ENCODE measurements at regions of chr14 and their contacts with region 1.

Region 1: DNA sequence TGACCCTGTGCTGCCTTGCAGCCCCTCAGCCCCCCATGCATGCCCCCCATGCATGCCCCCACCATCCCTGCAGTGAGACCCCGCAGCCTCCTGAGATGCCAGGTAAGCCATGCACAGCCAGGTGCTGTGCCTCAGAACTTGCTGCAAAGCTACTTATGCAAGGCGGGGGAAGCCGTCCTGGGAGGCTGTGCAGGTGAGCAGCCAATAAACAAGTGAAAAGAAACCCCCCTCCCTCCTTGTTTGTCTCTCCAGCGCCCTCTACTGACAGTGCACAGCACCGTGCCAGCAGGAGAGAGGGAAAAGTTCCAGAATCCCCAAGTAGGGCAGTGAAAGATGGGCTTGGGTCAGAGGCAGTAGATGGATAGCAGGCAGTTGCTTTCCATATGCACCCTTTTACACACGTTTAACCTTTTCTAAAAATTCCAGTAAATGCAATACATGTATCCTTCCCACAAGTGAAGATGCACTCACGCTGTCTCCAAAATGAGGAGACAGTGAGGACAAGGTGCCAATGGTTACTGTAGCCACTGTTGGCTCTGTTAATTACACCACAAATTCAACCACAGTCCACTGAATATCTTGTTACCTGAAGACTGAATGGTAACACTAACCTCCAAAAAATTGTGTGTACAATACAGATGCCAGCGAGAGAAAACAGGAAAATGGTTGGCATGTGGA is 18.0 kb downstream of the TNFAIP2 start:
- DNase-seq: peak; percentile 76
- ATAC-seq: no peak
- H3K4me3 ChIP-seq: no peak overlapping the region
- H3K27ac ChIP-seq: no peak overlapping the region
- H3K4me1 ChIP-seq: peaks cover 32% of the 10 kb centered on the region
- H3K27me3 ChIP-seq: no peaks in the 10 kb centered on the region
- CTCF ChIP-seq: peak; percentile 84

Region 2: DNA sequence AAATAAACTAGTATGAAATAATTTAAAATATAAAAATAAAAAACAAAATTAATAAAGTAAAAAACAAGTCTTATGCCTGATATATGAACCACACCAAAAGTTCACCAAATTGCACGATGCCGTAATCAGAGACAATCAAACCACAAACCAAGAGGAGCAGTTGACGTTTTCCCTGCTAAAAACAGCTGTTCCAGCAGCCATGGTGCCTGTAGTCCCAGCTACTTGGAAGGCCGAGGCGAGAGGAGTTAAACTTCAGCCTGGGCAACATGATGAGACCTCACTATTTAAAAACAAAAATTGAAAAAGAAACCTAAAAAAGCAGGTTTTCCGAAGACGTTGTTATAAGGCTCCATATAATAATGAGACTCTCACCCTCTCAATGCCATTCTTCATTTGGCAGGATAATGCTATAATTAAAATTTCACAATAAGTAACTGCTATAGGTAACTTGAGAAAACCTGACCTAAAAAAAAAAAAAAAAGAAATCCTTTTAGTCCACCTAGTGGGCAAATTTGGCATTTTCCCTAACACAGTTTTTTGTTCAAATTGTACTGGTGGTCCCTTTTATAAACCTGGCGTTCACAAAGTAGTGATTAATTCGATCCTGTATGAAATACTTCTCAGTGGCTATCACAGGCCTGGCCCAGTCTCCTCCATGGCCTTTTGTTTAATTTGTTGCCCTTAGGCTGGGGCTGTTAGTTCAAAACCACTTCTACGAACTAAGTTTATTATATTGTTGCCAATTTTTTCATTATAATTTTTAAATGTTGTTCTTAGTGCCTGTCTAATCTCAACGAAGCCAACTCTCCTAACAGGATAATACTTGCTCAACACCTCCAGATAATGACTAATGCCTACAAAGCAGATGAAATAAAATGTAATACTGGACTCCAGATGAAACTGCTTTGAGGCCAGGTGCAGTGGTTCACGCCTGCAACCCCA is 44.1 kb after region 1 on chr14:
- CTCF ChIA-PET with region 1: no interaction called
- POLR2A ChIA-PET with region 1: no interaction called
- intact Hi-C with region 1: loop called (anchors 5 kb)
- DNase-seq: peak; percentile 80
- ATAC-seq: no peak
- H3K4me3 ChIP-seq: no peak overlapping the region
- H3K27ac ChIP-seq: no peak overlapping the region
- H3K4me1 ChIP-seq: no peaks in the 10 kb centered on the region
- H3K27me3 ChIP-seq: no peaks in the 10 kb centered on the region
- CTCF ChIP-seq: peak; percentile 78

Measured in PC-3 (cell line).